Prostate gland (tissue), 2 donors: ENCODE measurements at regions of chr19 and their contacts with region 1.

Region 1: GRCh38 chr19:31326329-31327028 is 22.8 kb downstream of the TSHZ3 start:
- DNase-seq: no peak
- H3K4me3 ChIP-seq: no peak overlapping the region
- H3K27ac ChIP-seq: no peak overlapping the region
- H3K4me1 ChIP-seq: peaks cover 16% of the 10 kb centered on the region
- H3K27me3 ChIP-seq: no peaks in the 10 kb centered on the region
- CTCF ChIP-seq: no peak
- POLR2A ChIP-seq: no peak

Region 2: GRCh38 chr19:31262725-31263191 is 63.7 kb before region 1 on chr19:
- intact Hi-C with region 1: loop called (anchors 5 kb)
- DNase-seq: no peak
- H3K4me3 ChIP-seq: no peak overlapping the region
- H3K27ac ChIP-seq: no peak overlapping the region
- H3K4me1 ChIP-seq: no peaks in the 10 kb centered on the region
- H3K27me3 ChIP-seq: no peaks in the 10 kb centered on the region
- CTCF ChIP-seq: no peak
- POLR2A ChIP-seq: no peak